Naive thymus-derived CD4-positive, alpha-beta T cell (primary cell): ENCODE measurements at regions of chr15 and their contacts with region 1.

Region 1: DNA sequence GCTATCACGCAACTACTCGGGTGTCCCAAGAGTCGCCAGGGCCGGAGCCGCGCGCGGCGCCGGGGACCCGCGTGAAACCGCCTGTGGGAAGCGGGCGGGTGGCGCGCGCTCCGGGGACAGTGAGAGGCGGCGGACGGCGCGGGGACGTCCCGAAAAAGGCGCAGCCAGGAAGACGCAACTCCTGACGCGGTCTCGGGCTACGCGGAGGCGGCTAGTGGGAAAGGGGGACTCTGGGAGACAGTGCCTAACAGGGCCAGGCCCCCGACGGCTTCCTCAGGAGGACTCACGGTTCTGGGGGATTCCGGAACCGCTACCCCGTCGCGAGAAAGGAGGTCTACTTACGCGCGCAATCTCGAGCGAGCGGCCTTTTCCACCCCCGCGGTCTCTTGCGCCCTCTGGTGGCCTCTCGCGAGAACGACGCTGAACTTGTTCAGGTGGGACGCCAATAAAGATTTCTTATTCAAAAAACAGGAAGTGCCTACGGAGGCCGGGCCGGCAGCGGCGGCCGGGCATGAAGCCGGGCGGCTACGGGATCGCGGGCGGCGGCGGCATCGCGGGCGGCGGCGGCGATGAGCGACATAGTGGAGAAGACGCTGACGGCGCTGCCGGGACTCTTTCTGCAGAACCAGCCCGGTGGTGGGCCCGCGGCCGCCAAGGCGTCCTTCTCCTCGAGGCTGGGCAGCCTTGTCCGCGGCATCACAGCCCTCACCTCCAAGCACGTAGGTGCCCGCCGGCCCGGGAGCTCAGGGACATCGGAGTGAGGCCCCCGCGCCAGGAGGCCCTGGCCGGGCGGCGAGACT is at the start of gene AP4E1:
- DNase-seq: peak; percentile 91 to 96 (median 95)
- ATAC-seq: peak; percentile 81
- H3K4me3 ChIP-seq: peak within 1 kb of the TSS; percentile 74
- H3K4me3 Mint-ChIP-seq: peak within 1 kb of the TSS; percentile 89 to 99 (median 96)
- H3K27ac ChIP-seq: peak within 1 kb of the TSS; percentile 99
- H3K27ac Mint-ChIP-seq: peak within 1 kb of the TSS; percentile 93 to 99 (median 98)
- H3K4me1 ChIP-seq: peaks cover 4% of the 10 kb centered on the region in 2 donors
- H3K4me1 Mint-ChIP-seq: peaks cover 11 to 35% (median 30%) of the 10 kb centered on the region in 7 donors
- H3K27me3 ChIP-seq: no peaks in the 10 kb centered on the region
- H3K27me3 Mint-ChIP-seq: no peaks in the 10 kb centered on the region
- total RNA-seq, gene AP4E1: 9.9 to 13.8 (median 12.5) TPM

Region 2: GRCh38 chr15:49155110-49155833 is 1753.1 kb before region 1 on chr15 and contains the start of gene COPS2:
- CTCF ChIA-PET with region 1: no interaction called
- POLR2A ChIA-PET with region 1: interaction called, 3 read pairs
- intact Hi-C with region 1: loop called (anchors 2 kb)
- DNase-seq: peak; percentile 69 to 96 (median 94)
- ATAC-seq: peak; percentile 99
- H3K4me3 ChIP-seq: peak within 1 kb of the TSS; percentile 88
- H3K4me3 Mint-ChIP-seq: peak within 1 kb of the TSS; percentile 95 to 100 (median 98)
- H3K27ac ChIP-seq: peak within 1 kb of the TSS; percentile 93
- H3K27ac Mint-ChIP-seq: peak within 1 kb of the TSS; percentile 93 to 100 (median 97)
- H3K4me1 ChIP-seq: peaks cover 9 to 25% of the 10 kb centered on the region in 2 donors
- H3K4me1 Mint-ChIP-seq: peaks cover 40 to 72% (median 59%) of the 10 kb centered on the region in 7 donors
- H3K27me3 ChIP-seq: no peaks in the 10 kb centered on the region
- H3K27me3 Mint-ChIP-seq: no peaks in the 10 kb centered on the region
- total RNA-seq, gene COPS2: 51.0 to 91.5 (median 63.6) TPM

Region 3: GRCh38 chr15:50107591-50108408 is 800.6 kb before region 1 on chr15:
- CTCF ChIA-PET with region 1: no interaction called
- POLR2A ChIA-PET with region 1: no interaction called
- intact Hi-C with region 1: loop called in 1 of 2 experiments (anchors 5 kb)
- DNase-seq: peak in 1 of 9 donors; percentile 42
- ATAC-seq: peak; percentile 90
- H3K4me3 ChIP-seq: no peak overlapping the region
- H3K4me3 Mint-ChIP-seq: peak overlapping the region in 2 of 10 donors; percentile 33 to 80
- H3K27ac ChIP-seq: no peak overlapping the region
- H3K27ac Mint-ChIP-seq: peak overlapping the region in 2 of 9 donors; percentile 15 to 96
- H3K4me1 ChIP-seq: peaks cover 4 to 19% of the 10 kb centered on the region in 2 donors
- H3K4me1 Mint-ChIP-seq: peaks cover 21 to 73% (median 35%) of the 10 kb centered on the region in 7 donors
- H3K27me3 ChIP-seq: no peaks in the 10 kb centered on the region
- H3K27me3 Mint-ChIP-seq: peaks cover 0 to 22% (median 0%) of the 10 kb centered on the region in 5 donors

Region 4: DNA sequence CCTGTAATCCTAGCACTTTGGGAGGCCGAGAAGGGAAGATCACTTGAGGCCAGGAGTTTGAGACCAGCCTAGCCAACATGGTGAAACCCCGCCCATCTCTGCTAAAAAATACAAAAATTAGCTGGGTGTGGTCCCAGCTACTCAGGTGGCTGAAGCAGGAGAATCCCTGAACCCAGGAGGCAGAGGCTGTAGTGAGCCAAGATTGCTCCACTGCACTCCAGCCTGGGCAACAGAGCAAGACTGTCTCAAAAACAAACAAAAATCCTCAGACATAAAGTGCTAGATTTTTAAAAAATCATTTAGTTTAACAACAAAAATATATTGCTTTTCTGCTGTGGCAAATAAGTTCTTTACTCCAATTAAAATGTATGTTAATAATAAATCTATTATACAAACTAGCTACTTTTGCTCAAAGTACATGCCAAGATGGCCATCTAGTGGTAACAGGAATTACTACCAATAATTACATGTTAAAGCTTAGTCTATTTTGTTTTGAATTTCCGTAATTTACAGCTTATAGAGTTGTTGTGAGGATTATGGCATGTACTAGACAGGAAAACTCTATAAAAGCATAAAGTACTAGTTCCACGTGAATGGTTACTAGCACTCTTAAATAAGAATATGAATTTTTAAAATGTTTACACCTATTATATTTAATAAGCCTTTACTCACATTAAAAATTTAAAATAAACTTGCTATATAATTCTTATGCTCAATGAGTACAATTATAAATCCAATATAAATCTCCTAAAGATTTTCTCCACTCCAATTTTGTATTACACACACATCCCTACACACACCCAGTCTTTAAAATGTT is 592.4 kb before region 1 on chr15:
- CTCF ChIA-PET with region 1: no interaction called
- POLR2A ChIA-PET with region 1: no interaction called
- intact Hi-C with region 1: loop called in 1 of 2 experiments (anchors 5 kb)
- DNase-seq: peak in 7 of 9 donors; percentile 8 to 47 (median 30)
- ATAC-seq: peak; percentile 66
- H3K4me3 ChIP-seq: no peak overlapping the region
- H3K4me3 Mint-ChIP-seq: no peak overlapping the region
- H3K27ac ChIP-seq: no peak overlapping the region
- H3K27ac Mint-ChIP-seq: no peak overlapping the region
- H3K4me1 ChIP-seq: peaks cover 0 to 6% of the 10 kb centered on the region in 2 donors
- H3K4me1 Mint-ChIP-seq: peaks cover 12 to 34% (median 21%) of the 10 kb centered on the region in 7 donors
- H3K27me3 ChIP-seq: no peaks in the 10 kb centered on the region
- H3K27me3 Mint-ChIP-seq: no peaks in the 10 kb centered on the region

Region 5: DNA sequence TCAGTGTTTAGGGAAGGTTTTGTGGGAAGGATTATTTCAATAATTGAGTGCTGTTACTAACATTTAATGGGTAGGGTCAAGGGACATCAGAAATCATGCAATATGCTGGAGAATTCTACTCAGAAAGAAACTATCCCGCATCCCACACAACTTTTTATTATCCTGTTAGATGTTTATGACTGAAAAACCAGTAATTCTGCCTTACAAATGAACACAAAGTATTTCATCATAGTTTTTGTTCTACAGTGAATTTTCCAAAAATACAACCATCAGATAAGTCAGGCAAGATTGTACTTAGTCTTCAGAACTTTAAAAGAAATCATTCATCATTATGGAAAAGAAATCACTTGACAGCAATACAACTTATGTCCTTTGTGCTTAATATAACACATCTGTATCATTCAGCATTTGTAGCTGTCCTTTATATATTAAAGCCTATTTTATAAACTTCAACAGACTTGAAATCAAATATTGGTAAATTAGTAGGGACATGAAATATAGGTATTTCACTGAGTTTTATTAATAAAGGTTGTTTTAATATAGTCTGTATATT is 283.7 kb before region 1 on chr15:
- CTCF ChIA-PET with region 1: interaction called, 3 read pairs
- POLR2A ChIA-PET with region 1: interaction called, 3 read pairs
- intact Hi-C with region 1: loop called in 1 of 2 experiments (anchors 5 kb)
- DNase-seq: no peak
- ATAC-seq: no peak
- H3K4me3 ChIP-seq: no peak overlapping the region
- H3K4me3 Mint-ChIP-seq: no peak overlapping the region
- H3K27ac ChIP-seq: no peak overlapping the region
- H3K27ac Mint-ChIP-seq: peak overlapping the region in 2 of 9 donors; percentile 10 to 73
- H3K4me1 ChIP-seq: no peaks in the 10 kb centered on the region
- H3K4me1 Mint-ChIP-seq: peaks cover 0 to 11% (median 6%) of the 10 kb centered on the region in 7 donors
- H3K27me3 ChIP-seq: no peaks in the 10 kb centered on the region
- H3K27me3 Mint-ChIP-seq: no peaks in the 10 kb centered on the region

Region 6: GRCh38 chr15:50765195-50765973 is 143.0 kb before region 1 on chr15 and contains the start of gene SPPL2A:
- CTCF ChIA-PET with region 1: no interaction called
- POLR2A ChIA-PET with region 1: no interaction called
- intact Hi-C with region 1: loop called (anchors 1 kb)
- DNase-seq: peak; percentile 45 to 90 (median 61)
- ATAC-seq: peak; percentile 91
- H3K4me3 ChIP-seq: peak within 1 kb of the TSS; percentile 77
- H3K4me3 Mint-ChIP-seq: peak within 1 kb of the TSS; percentile 81 to 97 (median 94)
- H3K27ac ChIP-seq: peak within 1 kb of the TSS; percentile 90
- H3K27ac Mint-ChIP-seq: peak within 1 kb of the TSS; percentile 85 to 98 (median 93)
- H3K4me1 ChIP-seq: no peaks in the 10 kb centered on the region
- H3K4me1 Mint-ChIP-seq: peaks cover 27 to 58% (median 51%) of the 10 kb centered on the region in 7 donors
- H3K27me3 ChIP-seq: no peaks in the 10 kb centered on the region
- H3K27me3 Mint-ChIP-seq: no peaks in the 10 kb centered on the region
- total RNA-seq, gene SPPL2A: 42.1 to 100 (median 58.1) TPM

Region 7: GRCh38 chr15:51192521-51193280 is 284.3 kb after region 1 on chr15:
- CTCF ChIA-PET with region 1: no interaction called
- POLR2A ChIA-PET with region 1: no interaction called
- intact Hi-C with region 1: no loop called
- DNase-seq: peak; percentile 9 to 81 (median 45)
- ATAC-seq: peak; percentile 80
- H3K4me3 ChIP-seq: no peak overlapping the region
- H3K4me3 Mint-ChIP-seq: no peak overlapping the region
- H3K27ac ChIP-seq: no peak overlapping the region
- H3K27ac Mint-ChIP-seq: peak overlapping the region in 1 of 9 donors; percentile 41
- H3K4me1 ChIP-seq: no peaks in the 10 kb centered on the region
- H3K4me1 Mint-ChIP-seq: peaks cover 0 to 4% (median 0%) of the 10 kb centered on the region in 7 donors
- H3K27me3 ChIP-seq: peaks cover 2 to 3% of the 10 kb centered on the region in 2 donors
- H3K27me3 Mint-ChIP-seq: peaks cover 26 to 61% (median 49%) of the 10 kb centered on the region in 5 donors